Activated CD4-positive, alpha-beta memory T cell treated with anti-CD3 and anti-CD28 coated beads for 36 hours (primary cell): ENCODE measurements at regions of chr11 and their contacts with region 1.

Region 1: GRCh38 chr11:14974515-14975251 is 2.5 kb upstream of the CALCA start:
- DNase-seq: peak; percentile 83
- H3K4me3 Mint-ChIP-seq: peak overlapping the region; percentile 62
- H3K27ac Mint-ChIP-seq: no peak overlapping the region
- H3K4me1 Mint-ChIP-seq: peaks cover 26% of the 10 kb centered on the region
- H3K27me3 Mint-ChIP-seq: peaks cover 61% of the 10 kb centered on the region

Region 2: GRCh38 chr11:14789879-14790484 is 184.7 kb before region 1 on chr11:
- CTCF ChIA-PET with region 1: interaction called, 3 read pairs
- POLR2A ChIA-PET with region 1: no interaction called
- intact Hi-C with region 1: loop called (anchors 10 kb)
- DNase-seq: no peak
- H3K4me3 Mint-ChIP-seq: no peak overlapping the region
- H3K27ac Mint-ChIP-seq: no peak overlapping the region
- H3K4me1 Mint-ChIP-seq: peaks cover 14% of the 10 kb centered on the region
- H3K27me3 Mint-ChIP-seq: no peaks in the 10 kb centered on the region

Region 3: GRCh38 chr11:14861680-14862079 is 113.0 kb before region 1 on chr11:
- CTCF ChIA-PET with region 1: no interaction called
- POLR2A ChIA-PET with region 1: no interaction called
- intact Hi-C with region 1: no loop called
- DNase-seq: no peak
- H3K4me3 Mint-ChIP-seq: no peak overlapping the region
- H3K27ac Mint-ChIP-seq: no peak overlapping the region
- H3K4me1 Mint-ChIP-seq: peaks cover 17% of the 10 kb centered on the region
- H3K27me3 Mint-ChIP-seq: no peaks in the 10 kb centered on the region

Region 4: GRCh38 chr11:15006139-15006759 is 31.6 kb after region 1 on chr11:
- CTCF ChIA-PET with region 1: interaction called, 83 read pairs
- POLR2A ChIA-PET with region 1: no interaction called
- intact Hi-C with region 1: loop called (anchors 1 kb)
- DNase-seq: peak; percentile 10
- H3K4me3 Mint-ChIP-seq: no peak overlapping the region
- H3K27ac Mint-ChIP-seq: no peak overlapping the region
- H3K4me1 Mint-ChIP-seq: peaks cover 2% of the 10 kb centered on the region
- H3K27me3 Mint-ChIP-seq: peaks cover 32% of the 10 kb centered on the region

Region 5: GRCh38 chr11:15208378-15209222 is 233.9 kb after region 1 on chr11:
- CTCF ChIA-PET with region 1: interaction called, 5 read pairs
- POLR2A ChIA-PET with region 1: no interaction called
- intact Hi-C with region 1: loop called (anchors 1 kb)
- DNase-seq: peak; percentile 79
- H3K4me3 Mint-ChIP-seq: no peak overlapping the region
- H3K27ac Mint-ChIP-seq: no peak overlapping the region
- H3K4me1 Mint-ChIP-seq: no peaks in the 10 kb centered on the region
- H3K27me3 Mint-ChIP-seq: peaks cover 2% of the 10 kb centered on the region